ENCODE measurements at regions of chr10 and their contacts with region 1.

Region 1: GRCh38 chr10:101889256-101890210 is 45.9 kb upstream of the KCNIP2 start:
- DNase-seq: peak; percentile 30 to 54 (median 50)
- H3K4me3 ChIP-seq: no peak overlapping the region
- H3K4me3 Mint-ChIP-seq: no peak overlapping the region
- H3K27ac ChIP-seq: no peak overlapping the region
- H3K27ac Mint-ChIP-seq: no peak overlapping the region
- H3K4me1 ChIP-seq: no peaks in the 10 kb centered on the region
- H3K4me1 Mint-ChIP-seq: no peaks in the 10 kb centered on the region
- H3K27me3 ChIP-seq: no peaks in the 10 kb centered on the region
- H3K27me3 Mint-ChIP-seq: no peaks in the 10 kb centered on the region
- CTCF ChIP-seq: peak; percentile 91

Region 2: GRCh38 chr10:101818119-101818871 is 71.2 kb before region 1 on chr10 and contains the start of gene OGA:
- intact Hi-C with region 1: no loop called
- DNase-seq: peak; percentile 98 to 99 (median 99)
- H3K4me3 ChIP-seq: peak within 1 kb of the TSS; percentile 86 to 97 (median 88)
- H3K4me3 Mint-ChIP-seq: peak within 1 kb of the TSS; percentile 94 to 98
- H3K27ac ChIP-seq: peak within 1 kb of the TSS; percentile 70 to 89
- H3K27ac Mint-ChIP-seq: peak within 1 kb of the TSS; percentile 91 to 96 (median 93)
- H3K4me1 ChIP-seq: peaks cover 28 to 42% of the 10 kb centered on the region in 2 donors
- H3K4me1 Mint-ChIP-seq: peaks cover 46% of the 10 kb centered on the region
- H3K27me3 ChIP-seq: no peaks in the 10 kb centered on the region
- H3K27me3 Mint-ChIP-seq: no peaks in the 10 kb centered on the region
- CTCF ChIP-seq: no peak
- polyA plus RNA-seq, gene OGA: 6.9 to 104 (median 15.3) TPM

Region 3: DNA sequence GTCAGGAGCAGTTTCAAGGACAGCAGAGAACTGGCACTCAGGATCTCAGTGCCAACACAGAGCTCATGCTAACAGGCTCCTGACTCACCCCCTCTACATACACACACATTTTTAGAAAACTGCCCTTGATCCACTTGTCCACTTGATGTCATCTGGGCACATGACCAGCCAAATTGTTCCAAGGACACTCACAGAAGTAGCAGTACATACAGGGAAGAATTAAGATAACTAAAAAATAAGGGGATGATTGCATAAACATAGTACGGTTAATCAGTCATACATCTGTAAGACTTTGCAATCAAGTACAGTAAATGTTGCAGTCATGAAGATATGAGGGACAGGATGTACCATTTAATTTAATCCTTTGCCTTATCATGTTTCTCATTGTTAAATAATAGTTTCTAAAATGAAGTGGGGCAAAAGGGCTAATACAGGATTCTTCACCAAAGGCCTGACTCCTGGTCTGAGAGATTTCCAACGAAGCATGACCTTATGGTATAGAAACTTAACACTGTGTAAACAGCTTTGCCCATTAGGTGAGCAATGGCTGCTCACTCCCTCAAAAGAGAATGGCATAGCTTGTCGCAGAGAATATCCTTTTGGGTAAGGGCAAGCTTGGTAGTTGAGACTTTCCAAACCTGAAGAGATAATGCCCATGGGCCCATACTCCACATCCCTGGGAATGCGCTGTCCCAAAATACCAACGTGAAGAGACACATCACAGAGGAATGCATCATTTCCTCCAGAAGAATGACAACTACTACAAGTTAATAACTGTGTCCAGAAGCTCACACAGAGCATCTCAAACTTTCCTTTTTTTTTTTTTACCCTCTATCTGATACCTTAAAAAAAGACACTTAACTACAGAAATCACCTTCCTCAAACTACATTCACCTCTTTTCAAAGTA is 72.3 kb after region 1 on chr10:
- intact Hi-C with region 1: no loop called
- DNase-seq: no peak
- H3K4me3 ChIP-seq: no peak overlapping the region
- H3K4me3 Mint-ChIP-seq: no peak overlapping the region
- H3K27ac ChIP-seq: no peak overlapping the region
- H3K27ac Mint-ChIP-seq: no peak overlapping the region
- H3K4me1 ChIP-seq: no peaks in the 10 kb centered on the region
- H3K4me1 Mint-ChIP-seq: peaks cover 8% of the 10 kb centered on the region
- H3K27me3 ChIP-seq: no peaks in the 10 kb centered on the region
- H3K27me3 Mint-ChIP-seq: no peaks in the 10 kb centered on the region
- CTCF ChIP-seq: no peak

Region 4: DNA sequence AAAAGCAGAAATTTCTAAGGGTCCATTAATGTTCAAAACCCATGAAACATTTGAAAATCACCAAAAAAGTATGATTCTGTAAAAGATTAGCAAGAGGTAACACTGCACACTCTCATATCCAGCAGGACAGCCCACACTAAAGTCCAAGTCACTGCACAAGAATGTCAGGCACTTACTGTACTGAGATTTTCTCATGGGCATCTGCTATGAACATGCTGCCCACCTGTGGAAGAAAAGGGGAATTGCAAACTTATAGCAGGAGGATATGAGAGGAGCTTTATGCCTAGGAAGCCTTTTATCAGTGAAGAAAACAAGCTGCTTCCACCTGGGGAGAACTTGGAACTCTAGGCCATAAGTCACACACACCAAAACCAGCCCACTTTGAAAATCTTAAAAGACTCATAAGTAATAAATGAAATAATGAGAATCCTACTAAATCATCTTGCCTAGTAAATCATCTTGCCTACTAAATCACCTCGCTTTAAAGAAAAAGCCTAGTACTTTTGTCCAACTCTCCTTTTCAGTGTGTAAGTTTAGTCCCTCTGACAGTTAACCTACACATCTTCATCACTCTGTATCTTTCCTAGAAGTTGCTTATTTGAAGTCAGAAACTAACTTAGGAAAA is 120.4 kb after region 1 on chr10:
- intact Hi-C with region 1: loop called (anchors 5 to 10 kb)
- DNase-seq: peak; percentile 53 to 68 (median 63)
- H3K4me3 ChIP-seq: no peak overlapping the region
- H3K4me3 Mint-ChIP-seq: no peak overlapping the region
- H3K27ac ChIP-seq: peak overlapping the region in 1 of 2 donors; percentile 52
- H3K27ac Mint-ChIP-seq: peak overlapping the region in 1 of 7 donors; percentile 57
- H3K4me1 ChIP-seq: peaks cover 25 to 26% of the 10 kb centered on the region in 2 donors
- H3K4me1 Mint-ChIP-seq: peaks cover 34% of the 10 kb centered on the region
- H3K27me3 ChIP-seq: no peaks in the 10 kb centered on the region
- H3K27me3 Mint-ChIP-seq: no peaks in the 10 kb centered on the region
- CTCF ChIP-seq: peak; percentile 84

Region 5: GRCh38 chr10:102072673-102073527 is 183.4 kb after region 1 on chr10:
- intact Hi-C with region 1: loop called (anchors 2 to 10 kb)
- DNase-seq: peak; percentile 67 to 80 (median 76)
- H3K4me3 ChIP-seq: no peak overlapping the region
- H3K4me3 Mint-ChIP-seq: no peak overlapping the region
- H3K27ac ChIP-seq: no peak overlapping the region
- H3K27ac Mint-ChIP-seq: no peak overlapping the region
- H3K4me1 ChIP-seq: peaks cover 18 to 24% of the 10 kb centered on the region in 2 donors
- H3K4me1 Mint-ChIP-seq: peaks cover 35% of the 10 kb centered on the region
- H3K27me3 ChIP-seq: no peaks in the 10 kb centered on the region
- H3K27me3 Mint-ChIP-seq: no peaks in the 10 kb centered on the region
- CTCF ChIP-seq: peak; percentile 89

Region 6: GRCh38 chr10:103125323-103126267 is 1236.1 kb after region 1 on chr10:
- intact Hi-C with region 1: no loop called
- DNase-seq: no peak
- H3K4me3 ChIP-seq: no peak overlapping the region
- H3K4me3 Mint-ChIP-seq: no peak overlapping the region
- H3K27ac ChIP-seq: peak overlapping the region in 1 of 2 donors; percentile 26
- H3K27ac Mint-ChIP-seq: peak overlapping the region in 1 of 7 donors; percentile 6
- H3K4me1 ChIP-seq: no peaks in the 10 kb centered on the region
- H3K4me1 Mint-ChIP-seq: peaks cover 2% of the 10 kb centered on the region
- H3K27me3 ChIP-seq: no peaks in the 10 kb centered on the region
- H3K27me3 Mint-ChIP-seq: no peaks in the 10 kb centered on the region
- CTCF ChIP-seq: no peak

Region 7: DNA sequence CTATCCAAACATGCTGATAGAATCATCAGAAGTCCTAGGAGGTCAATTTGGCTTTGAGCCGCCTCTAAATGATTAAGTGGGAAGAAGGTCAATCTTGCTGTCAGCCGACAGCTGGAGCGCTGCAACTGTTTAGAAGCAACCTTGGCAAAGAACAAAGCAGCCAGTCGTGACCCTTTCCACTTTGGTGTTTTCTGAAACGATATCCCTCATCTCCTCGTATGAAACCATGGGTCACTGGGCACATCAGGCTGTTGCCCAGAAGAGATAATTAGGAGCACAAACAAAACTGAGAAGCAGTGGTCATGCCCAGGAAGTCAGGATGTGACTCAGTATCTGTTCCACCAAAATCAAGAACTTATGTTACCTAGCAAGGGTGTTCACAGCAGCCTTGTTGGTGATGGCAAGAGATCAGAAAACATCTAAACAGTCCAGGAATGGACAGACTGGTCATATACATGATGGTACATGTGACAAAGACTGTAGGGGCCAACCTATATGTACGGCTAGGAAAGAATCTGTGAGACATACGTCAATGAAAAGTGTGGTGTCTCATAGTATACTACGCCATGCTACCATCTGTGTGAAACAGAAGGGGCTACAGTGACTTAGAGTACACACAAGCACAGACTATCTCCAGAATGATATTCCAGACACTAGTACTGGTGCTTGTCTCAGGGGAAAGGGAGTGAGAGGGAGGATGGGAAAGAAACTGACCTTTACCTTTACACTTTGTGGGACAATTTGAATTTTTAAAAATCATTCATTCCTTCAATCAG is 2006.1 kb after region 1 on chr10:
- intact Hi-C with region 1: no loop called
- DNase-seq: no peak
- H3K4me3 ChIP-seq: no peak overlapping the region
- H3K4me3 Mint-ChIP-seq: no peak overlapping the region
- H3K27ac ChIP-seq: peak overlapping the region in 1 of 2 donors; percentile 62
- H3K27ac Mint-ChIP-seq: peak overlapping the region in 6 of 7 donors; percentile 2 to 55 (median 39)
- H3K4me1 ChIP-seq: peaks cover 3 to 21% of the 10 kb centered on the region in 2 donors
- H3K4me1 Mint-ChIP-seq: peaks cover 14% of the 10 kb centered on the region
- H3K27me3 ChIP-seq: no peaks in the 10 kb centered on the region
- H3K27me3 Mint-ChIP-seq: no peaks in the 10 kb centered on the region
- CTCF ChIP-seq: no peak

Measured in CD14-positive monocyte (primary cell).